A673 (cell line): ENCODE measurements at regions of chr12 and their contacts with region 1.

Region 1: DNA sequence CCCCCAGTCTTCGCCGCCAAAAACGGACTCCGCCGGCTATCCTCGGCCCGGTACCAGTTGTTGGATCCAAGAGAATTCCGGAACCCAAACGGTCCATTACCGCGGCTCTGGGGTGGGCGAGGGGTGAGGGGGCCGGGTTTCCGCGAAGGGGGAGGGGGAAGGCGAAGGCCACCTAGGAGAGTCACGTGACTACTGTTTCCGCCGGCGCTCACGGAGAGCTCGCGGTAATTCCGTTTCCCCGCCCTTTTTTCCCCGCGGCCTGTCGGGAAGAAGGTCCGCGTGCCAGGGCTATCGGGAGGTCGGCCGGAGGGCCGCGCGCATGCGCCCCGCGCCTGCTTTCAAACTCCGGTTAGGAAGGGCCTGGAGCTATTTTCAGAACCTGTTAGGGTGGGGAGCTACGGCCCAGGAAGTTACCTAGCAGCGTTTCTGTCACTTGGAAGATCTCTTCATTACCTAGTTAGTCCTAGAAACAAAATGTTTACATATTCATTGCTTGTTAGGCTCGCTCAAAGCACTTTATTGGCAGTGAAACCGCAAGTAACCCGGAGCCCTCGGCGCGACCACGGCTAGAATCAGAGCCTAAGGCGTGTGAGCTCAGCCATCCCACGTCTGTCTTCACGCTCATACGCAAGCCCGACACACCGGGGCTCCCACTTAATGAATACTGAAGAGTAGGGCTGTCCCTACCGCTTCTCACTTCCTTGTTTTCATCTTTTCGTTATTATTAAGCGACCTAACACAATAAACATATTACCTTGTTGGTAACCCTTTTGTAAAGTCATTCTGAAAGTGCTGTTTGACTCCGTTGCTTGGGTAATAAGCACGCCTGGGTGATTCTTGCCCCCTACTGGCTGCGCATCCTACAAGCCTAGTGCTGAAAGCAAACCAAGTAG is 624 bp upstream of the SBNO1 start:
- DNase-seq: peak; percentile 100
- H3K4me3 ChIP-seq: peak overlapping the region; percentile 94
- H3K27ac ChIP-seq: peak overlapping the region; percentile 86
- H3K4me1 ChIP-seq: peaks cover 6% of the 10 kb centered on the region
- H3K27me3 ChIP-seq: no peaks in the 10 kb centered on the region
- CTCF ChIP-seq: peak; percentile 85

Region 2: GRCh38 chr12:123601602-123602489 is 236.6 kb after region 1 on chr12 and contains the start of gene DDX55:
- CTCF ChIA-PET with region 1: no interaction called
- POLR2A ChIA-PET with region 1: interaction called, 10 read pairs
- intact Hi-C with region 1: no loop called
- DNase-seq: peak; percentile 92
- H3K4me3 ChIP-seq: peak within 1 kb of the TSS; percentile 96
- H3K27ac ChIP-seq: peak within 1 kb of the TSS; percentile 93
- H3K4me1 ChIP-seq: peaks cover 6% of the 10 kb centered on the region
- H3K27me3 ChIP-seq: no peaks in the 10 kb centered on the region
- CTCF ChIP-seq: peak; percentile 51
- total RNA-seq, gene DDX55: 49.5 and 53.4 TPM in 2 replicates

Region 3: DNA sequence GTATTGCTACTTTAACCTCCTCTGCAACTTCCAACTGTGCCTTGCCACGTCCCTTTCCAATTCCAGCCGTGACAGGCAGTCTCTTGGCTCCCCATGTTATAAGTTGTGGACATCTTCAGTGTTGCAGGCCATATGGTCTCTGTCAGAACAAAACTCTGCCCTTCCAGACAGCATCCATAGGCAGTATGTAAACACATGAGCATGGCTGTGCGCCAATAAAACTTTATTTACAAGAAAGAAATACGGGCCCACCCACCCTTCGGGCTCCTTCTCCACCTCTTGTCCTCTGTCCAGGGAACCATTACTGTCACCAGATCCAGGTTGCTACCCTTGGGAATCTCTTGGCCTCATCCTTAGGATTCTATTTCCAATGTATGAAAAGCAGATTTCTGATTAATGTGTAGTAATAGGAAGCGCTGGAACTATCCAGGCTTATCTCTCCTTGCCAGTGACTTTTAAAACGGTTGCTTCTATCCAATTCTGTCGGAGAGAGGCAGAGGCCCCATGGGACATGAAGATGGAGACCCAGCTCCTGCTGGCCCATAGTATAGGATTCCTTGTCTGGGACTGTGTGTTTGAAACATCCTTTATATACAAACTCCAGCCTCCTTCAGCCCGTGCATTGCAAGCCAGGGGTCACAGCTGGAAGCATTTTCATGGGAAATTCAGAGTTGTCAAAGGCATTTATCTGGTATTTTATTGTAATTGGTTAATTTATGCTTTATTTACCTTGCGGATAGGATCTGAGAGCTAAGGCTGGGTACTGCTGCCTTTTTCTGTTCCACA is 722.2 kb after region 1 on chr12:
- CTCF ChIA-PET with region 1: interaction called, 10 read pairs
- POLR2A ChIA-PET with region 1: no interaction called
- intact Hi-C with region 1: no loop called
- DNase-seq: no peak
- H3K4me3 ChIP-seq: no peak overlapping the region
- H3K27ac ChIP-seq: no peak overlapping the region
- H3K4me1 ChIP-seq: no peaks in the 10 kb centered on the region
- H3K27me3 ChIP-seq: no peaks in the 10 kb centered on the region
- CTCF ChIP-seq: no peak